Activated B cell treated with CpG ODN at 0.5 μM for 24 hours (primary cell): ENCODE measurements at regions of chr22 and their contacts with region 1.

Region 1: GRCh38 chr22:31199183-31199582 is 12.9 kb upstream of the LIMK2 start:
- DNase-seq: no peak
- ATAC-seq: no peak
- H3K4me3 Mint-ChIP-seq: no peak overlapping the region
- H3K27ac Mint-ChIP-seq: no peak overlapping the region
- H3K4me1 Mint-ChIP-seq: no peaks in the 10 kb centered on the region
- H3K27me3 Mint-ChIP-seq: no peaks in the 10 kb centered on the region
- CTCF ChIP-seq: no peak

Region 2: DNA sequence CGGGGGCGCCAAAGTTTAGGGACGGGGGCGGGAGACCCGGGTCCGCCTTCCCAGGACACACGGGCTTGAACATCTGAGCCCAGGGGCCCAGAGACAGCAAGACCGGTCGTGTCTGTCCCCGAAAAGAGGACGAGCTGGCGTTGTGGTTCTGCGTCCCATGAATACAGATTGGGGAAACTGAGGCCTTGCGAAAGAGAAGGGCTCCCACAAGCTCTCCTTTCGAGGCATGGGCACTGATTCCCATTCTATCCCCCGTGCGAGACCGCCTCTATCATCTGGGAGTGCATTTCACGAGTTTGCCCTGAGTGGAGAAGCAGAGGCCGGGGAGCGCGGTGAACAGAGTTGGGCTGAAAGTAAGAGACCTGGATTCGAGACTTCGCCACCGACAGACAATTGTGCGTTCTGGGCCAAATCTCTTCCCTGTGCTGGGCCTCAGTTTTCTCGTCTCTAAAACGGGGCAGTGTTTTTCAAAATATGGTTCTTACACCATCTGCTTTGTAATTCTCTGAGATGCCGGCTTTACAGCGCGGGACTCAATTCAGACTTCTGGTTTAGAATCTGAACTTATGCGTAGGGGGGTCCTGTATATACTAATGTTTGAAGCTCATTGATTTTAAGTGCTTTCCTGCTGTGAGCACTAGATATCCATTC is 38.7 kb before region 1 on chr22:
- CTCF ChIA-PET with region 1: no interaction called
- POLR2A ChIA-PET with region 1: no interaction called
- intact Hi-C with region 1: no loop called
- DNase-seq: no peak
- ATAC-seq: peak; percentile 40
- H3K4me3 Mint-ChIP-seq: peak overlapping the region; percentile 99
- H3K27ac Mint-ChIP-seq: peak overlapping the region; percentile 96
- H3K4me1 Mint-ChIP-seq: peaks cover 30% of the 10 kb centered on the region
- H3K27me3 Mint-ChIP-seq: no peaks in the 10 kb centered on the region
- CTCF ChIP-seq: no peak

Region 3: DNA sequence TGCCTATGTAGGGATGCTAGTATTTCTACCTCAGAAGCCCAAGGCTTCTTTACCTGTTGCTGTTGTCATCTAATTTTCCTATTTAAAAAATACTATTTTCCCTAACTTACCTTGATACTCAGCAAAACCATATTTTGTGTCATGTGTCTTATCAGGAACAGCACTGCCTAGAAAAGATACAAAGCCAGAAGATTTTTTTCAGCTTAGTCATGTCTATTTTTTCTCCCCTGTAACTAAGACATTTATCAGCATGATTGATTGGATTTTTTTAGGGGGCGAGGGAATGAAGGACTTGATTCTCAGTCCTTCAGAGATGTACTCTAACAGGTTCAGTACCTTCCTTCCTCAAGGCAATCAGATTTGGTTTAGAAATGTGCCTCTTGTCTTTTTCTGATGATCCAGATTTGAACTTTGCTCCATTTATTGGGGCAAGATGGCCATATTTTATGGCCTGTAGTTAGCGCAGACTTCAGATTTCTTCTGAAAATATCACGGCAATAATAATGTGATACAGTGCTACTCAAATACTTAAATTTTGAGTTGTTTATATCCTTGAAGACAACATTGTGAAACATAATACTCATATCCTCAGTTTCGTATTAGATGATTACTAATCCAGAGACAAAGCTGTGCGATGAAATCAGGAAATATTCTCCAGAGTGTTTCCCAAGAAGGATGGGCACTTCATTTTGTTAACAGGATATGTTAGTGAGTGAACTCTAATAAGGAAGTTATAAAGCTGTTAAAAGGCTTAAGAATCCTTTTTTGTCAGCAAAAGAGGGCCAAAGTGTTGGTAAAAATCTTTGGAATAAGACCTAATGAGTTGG is 96.9 kb after region 1 on chr22:
- CTCF ChIA-PET with region 1: no interaction called
- POLR2A ChIA-PET with region 1: interaction called, 11 read pairs
- intact Hi-C with region 1: no loop called
- DNase-seq: no peak
- ATAC-seq: no peak
- H3K4me3 Mint-ChIP-seq: no peak overlapping the region
- H3K27ac Mint-ChIP-seq: no peak overlapping the region
- H3K4me1 Mint-ChIP-seq: peaks cover 45% of the 10 kb centered on the region
- H3K27me3 Mint-ChIP-seq: no peaks in the 10 kb centered on the region
- CTCF ChIP-seq: no peak